ENCODE measurements at regions of chr10 and their contacts with region 1.

Region 1: GRCh38 chr10:124588736-124589490 is 127.3 kb downstream of the LHPP start:
- DNase-seq: no peak
- ATAC-seq: no peak
- H3K4me3 Mint-ChIP-seq: no peak overlapping the region
- H3K27ac Mint-ChIP-seq: no peak overlapping the region
- H3K4me1 Mint-ChIP-seq: peaks cover 57% of the 10 kb centered on the region
- H3K27me3 Mint-ChIP-seq: no peaks in the 10 kb centered on the region
- CTCF ChIP-seq: no peak

Region 2: DNA sequence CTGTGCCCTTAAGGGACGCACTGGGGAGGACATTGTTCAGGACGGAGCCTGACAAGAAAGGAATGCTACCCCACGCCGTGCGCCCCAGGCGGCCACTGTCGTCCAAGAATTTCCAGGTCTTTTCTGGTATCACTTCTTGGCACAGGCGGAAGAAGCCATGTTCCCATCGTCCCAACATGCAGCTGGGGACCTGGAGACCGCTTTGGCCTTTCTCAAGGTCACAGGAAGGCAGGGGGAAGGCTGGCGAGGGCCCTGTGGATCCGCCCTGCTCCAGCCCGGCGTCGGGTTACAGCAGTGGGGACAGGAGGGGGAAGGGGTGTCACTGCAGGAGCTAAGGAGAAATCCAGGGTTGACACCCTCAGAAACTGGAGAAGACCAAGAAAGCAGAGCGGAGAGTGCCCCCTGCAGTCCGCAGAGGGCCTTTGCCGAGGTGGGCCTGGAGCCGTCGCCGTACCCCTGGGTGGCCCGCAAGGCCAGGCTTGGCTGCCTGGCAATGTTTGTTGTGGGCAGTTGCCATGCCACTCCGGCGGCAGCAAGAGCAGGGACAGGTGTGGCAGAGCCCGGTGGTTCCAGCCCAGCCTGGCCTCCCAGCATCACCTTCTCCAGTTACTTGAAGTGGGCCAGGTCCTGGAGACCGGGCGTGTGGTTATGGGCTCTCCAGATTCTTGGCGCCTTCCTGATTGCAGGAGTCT is 23.2 kb before region 1 on chr10:
- CTCF ChIA-PET with region 1: no interaction called
- POLR2A ChIA-PET with region 1: no interaction called
- intact Hi-C with region 1: loop called (anchors 2 kb)
- DNase-seq: no peak
- ATAC-seq: peak; percentile 30
- H3K4me3 Mint-ChIP-seq: no peak overlapping the region
- H3K27ac Mint-ChIP-seq: no peak overlapping the region
- H3K4me1 Mint-ChIP-seq: peaks cover 54% of the 10 kb centered on the region
- H3K27me3 Mint-ChIP-seq: no peaks in the 10 kb centered on the region
- CTCF ChIP-seq: no peak

Region 3: DNA sequence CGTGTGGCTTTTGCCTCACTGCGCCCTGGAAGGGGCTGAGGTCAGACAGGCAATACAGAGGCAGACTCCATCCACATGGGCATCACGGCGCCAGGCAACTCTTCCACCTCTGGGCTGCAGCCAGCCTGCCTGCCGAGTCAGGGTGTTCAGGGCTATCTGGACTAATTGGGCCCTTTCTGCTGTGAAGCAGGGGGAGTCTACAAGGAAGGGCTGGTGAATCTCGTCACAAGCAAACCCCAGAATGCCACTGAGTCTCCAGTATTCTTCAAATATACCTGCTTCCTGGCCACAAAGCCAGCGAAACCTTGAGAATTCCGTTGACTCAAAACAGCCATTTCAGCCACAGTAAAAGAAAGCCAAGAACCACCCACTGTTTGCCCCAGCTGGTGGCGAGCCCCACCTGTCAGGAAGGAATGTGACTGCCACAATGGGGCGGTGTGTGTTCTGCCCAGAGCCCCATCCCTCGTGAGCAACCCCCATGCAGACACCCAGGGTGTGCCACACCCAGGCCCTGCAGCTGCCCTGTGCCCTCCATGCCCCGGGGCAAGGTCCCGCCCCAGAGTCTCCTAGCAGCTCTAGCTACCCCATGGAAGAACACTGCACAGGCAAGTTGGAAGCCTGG is 38.0 kb after region 1 on chr10:
- CTCF ChIA-PET with region 1: no interaction called
- POLR2A ChIA-PET with region 1: interaction called, 3 read pairs
- intact Hi-C with region 1: loop called (anchors 5 kb)
- DNase-seq: no peak
- ATAC-seq: peak; percentile 63
- H3K4me3 Mint-ChIP-seq: peak overlapping the region; percentile 46
- H3K27ac Mint-ChIP-seq: peak overlapping the region; percentile 95
- H3K4me1 Mint-ChIP-seq: peaks cover 99% of the 10 kb centered on the region
- H3K27me3 Mint-ChIP-seq: no peaks in the 10 kb centered on the region
- CTCF ChIP-seq: no peak

Region 4: DNA sequence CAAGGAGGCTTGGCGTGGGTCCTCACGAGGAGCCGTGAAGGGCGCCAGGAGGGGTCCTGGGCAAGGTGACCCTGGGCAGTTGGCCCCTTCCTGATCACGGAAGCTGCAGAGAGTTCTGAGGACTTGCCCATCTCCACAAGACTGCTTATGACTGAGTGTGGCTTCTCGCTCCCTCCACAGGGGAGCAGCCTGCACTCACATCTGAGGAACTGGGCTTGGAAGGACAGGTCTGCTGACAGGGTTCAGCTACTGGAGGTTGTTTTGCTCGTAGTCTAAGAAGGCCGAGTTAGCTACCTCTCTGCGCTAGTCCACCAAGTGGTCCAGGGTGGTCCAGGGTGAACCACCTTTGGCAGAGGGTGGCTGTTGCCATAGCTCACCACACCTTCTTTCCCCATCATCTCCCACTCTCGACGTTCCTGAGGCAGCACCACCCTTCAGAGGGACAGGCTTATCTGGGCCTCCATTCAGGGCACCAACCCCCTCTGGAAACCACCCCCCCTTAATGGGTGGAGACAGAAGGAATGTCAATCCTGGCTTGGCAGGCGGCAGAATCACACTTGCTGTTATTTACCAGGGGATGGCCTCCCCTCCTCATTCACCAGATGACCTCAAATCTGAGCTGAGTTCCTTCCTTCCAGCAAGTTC is 117.0 kb after region 1 on chr10:
- CTCF ChIA-PET with region 1: no interaction called
- POLR2A ChIA-PET with region 1: no interaction called
- intact Hi-C with region 1: no loop called
- DNase-seq: no peak
- ATAC-seq: no peak
- H3K4me3 Mint-ChIP-seq: no peak overlapping the region
- H3K27ac Mint-ChIP-seq: peak overlapping the region; percentile 96
- H3K4me1 Mint-ChIP-seq: peaks cover 99% of the 10 kb centered on the region
- H3K27me3 Mint-ChIP-seq: no peaks in the 10 kb centered on the region
- CTCF ChIP-seq: no peak